Right ventricle myocardium inferior (tissue), 1 donor: ENCODE measurements at regions of chr10 and their contacts with region 1.

Region 1: GRCh38 chr10:12264204-12264940 is 68.4 kb downstream of the CDC123 start:
- DNase-seq: peak; percentile 91
- ATAC-seq: peak; percentile 82

Region 2: DNA sequence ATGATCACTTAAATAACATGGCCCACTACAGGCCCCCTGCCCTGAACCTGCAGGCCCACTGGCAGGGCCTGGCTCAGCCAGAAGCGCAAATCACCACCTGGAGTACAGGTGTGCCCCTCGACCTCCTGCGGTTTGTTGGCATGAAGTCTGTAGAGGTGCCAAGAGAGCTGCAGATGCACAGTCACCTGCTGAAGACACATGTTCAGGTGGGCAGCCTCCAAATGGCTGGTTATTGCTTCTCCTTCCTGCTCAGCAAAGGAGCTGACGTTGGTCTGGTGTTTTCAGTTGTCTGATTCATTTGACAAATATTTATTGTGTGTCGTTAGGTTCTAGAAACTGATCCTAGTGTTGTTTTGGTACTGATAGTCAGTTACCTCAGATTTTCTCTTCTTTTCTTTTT is 166.6 kb before region 1 on chr10:
- intact Hi-C with region 1: no loop called
- DNase-seq: no peak
- ATAC-seq: no peak

Region 3: GRCh38 chr10:12484941-12485805 is 220.8 kb after region 1 on chr10:
- intact Hi-C with region 1: loop called (anchors 10 kb)
- DNase-seq: no peak
- ATAC-seq: peak; percentile 71

Region 4: GRCh38 chr10:12656518-12657142 is 392.3 kb after region 1 on chr10:
- intact Hi-C with region 1: loop called (anchors 2 kb)
- DNase-seq: no peak
- ATAC-seq: no peak

Region 5: DNA sequence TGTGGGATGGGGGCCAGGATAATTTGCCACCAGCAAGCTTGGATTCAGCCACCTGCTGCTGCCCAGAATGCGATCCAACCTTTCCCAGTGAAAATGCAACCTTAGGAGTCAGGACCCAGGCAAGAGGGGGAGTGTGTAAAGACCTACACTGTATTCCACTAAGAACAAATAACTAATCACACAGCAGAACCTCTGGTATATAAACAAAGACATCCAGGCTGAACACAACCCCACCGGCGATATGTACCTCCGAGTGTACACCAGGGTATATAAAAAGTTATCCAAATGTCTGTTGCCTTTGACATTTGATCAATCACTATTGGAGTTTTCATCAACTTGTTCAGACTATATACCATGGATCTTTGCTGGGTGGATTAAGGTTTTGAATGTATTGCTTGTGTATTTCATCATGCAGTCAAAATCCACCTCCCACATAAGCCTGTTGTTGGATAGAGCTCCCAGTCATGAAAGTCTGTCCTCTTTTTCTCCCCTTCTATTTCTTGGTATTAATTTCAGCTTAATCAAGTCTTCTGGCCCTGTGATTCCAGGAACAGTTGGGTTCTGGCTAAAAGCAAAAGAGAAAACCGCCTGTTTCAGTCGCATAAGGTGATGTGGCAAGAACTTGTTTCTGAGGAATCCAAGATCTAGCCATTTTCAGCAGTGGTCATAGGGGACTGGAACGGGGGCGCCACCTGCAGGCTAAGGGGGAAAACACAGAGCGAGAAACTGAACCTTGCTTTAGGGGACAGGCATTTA is 446.4 kb after region 1 on chr10:
- intact Hi-C with region 1: loop called (anchors 1 kb)
- DNase-seq: peak; percentile 75
- ATAC-seq: peak; percentile 81

Region 6: GRCh38 chr10:13074561-13075451 is 810.4 kb after region 1 on chr10:
- intact Hi-C with region 1: loop called (anchors 10 kb)
- DNase-seq: no peak
- ATAC-seq: peak; percentile 76

Region 7: GRCh38 chr10:13099666-13100348 is 835.4 kb after region 1 on chr10 and contains the start of gene OPTN:
- intact Hi-C with region 1: loop called (anchors 10 kb)
- DNase-seq: peak; percentile 85
- ATAC-seq: peak; percentile 91
- total RNA-seq, gene OPTN: 146 TPM